ENCODE measurements at regions of chr10 and their contacts with region 1.

Region 1: GRCh38 chr10:5873515-5873995 is 16.1 kb downstream of the ANKRD16 start:
- DNase-seq: peak; percentile 66
- ATAC-seq: peak; percentile 86
- H3K4me3 Mint-ChIP-seq: no peak overlapping the region
- H3K27ac Mint-ChIP-seq: no peak overlapping the region
- H3K4me1 Mint-ChIP-seq: 0 out of 2 replicates have a peak, but pooled peaks cover 2% of the 10 kb centered on the region
- H3K27me3 Mint-ChIP-seq: no peaks in the 10 kb centered on the region
- CTCF ChIP-seq: peak; percentile 60

Region 2: GRCh38 chr10:5862360-5862961 is 11.1 kb before region 1 on chr10:
- CTCF ChIA-PET with region 1: interaction called, 14 read pairs
- POLR2A ChIA-PET with region 1: interaction called, 3 read pairs
- DNase-seq: no peak
- ATAC-seq: no peak
- H3K4me3 Mint-ChIP-seq: no peak overlapping the region
- H3K27ac Mint-ChIP-seq: no peak overlapping the region
- H3K4me1 Mint-ChIP-seq: 0 out of 2 replicates have a peak, but pooled peaks cover under 1% of the 10 kb centered on the region
- H3K27me3 Mint-ChIP-seq: no peaks in the 10 kb centered on the region
- CTCF ChIP-seq: no peak

Region 3: DNA sequence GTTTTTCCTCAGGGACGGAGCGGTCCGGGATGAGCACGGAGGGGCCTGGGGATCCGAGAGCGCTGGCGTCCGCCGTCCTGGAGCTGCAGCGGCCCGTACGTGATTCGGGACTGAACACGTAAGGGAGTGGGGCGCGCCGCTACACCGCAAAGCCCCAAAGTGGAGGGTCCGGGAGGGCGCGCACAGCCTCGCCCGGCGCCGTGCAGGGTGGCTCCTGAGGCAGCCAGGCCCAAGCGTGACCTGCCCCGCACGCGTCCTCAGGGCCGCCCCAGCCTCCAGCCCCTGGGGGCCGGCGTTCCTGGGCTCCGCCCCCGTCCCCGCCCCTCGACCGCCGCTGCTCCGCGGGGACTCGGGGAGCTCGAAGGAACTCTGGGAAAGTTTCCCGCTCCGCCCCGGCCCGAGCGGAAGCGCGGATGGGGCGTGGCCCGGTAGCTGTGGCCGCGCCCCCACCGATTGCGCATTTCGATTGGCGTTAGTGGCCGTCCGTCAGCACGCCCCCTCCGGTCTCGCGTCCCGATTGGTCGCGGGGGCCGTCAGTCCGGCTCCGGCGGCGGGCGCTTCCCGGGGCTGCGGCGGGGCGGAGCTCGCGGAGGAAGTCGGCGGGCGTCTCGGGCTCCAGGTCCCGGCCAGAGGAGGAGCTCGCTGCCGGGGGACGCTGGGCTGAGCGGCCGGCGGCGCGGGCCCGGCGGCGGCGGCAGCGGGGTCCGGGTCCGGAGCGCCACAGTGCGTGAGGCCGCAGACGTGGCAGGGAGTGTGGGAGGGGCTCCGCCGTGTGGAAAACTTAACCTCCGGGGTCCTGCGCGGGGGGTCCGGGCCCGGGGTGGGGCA is 16.3 kb after region 1 on chr10 and contains the starts of genes ANKRD16 and FBH1:
- CTCF ChIA-PET with region 1: interaction called, 12 read pairs
- POLR2A ChIA-PET with region 1: no interaction called
- DNase-seq: peak; percentile 97
- ATAC-seq: peak; percentile 88
- H3K4me3 Mint-ChIP-seq: peak within 1 kb of the TSS; percentile 95
- H3K27ac Mint-ChIP-seq: peak within 1 kb of the TSS; percentile 95
- H3K4me1 Mint-ChIP-seq: peaks cover 28% of the 10 kb centered on the region
- H3K27me3 Mint-ChIP-seq: no peaks in the 10 kb centered on the region
- CTCF ChIP-seq: no peak
- total RNA-seq, gene ANKRD16: 12.2 to 13.6 TPM (median 12.6 TPM) in 3 replicates
- total RNA-seq, gene FBH1: 62.8 to 66.8 TPM (median 63.7 TPM) in 3 replicates